Thyroid gland (tissue), 4 donors: ENCODE measurements at regions of chr3 and their contacts with region 1.

Region 1: DNA sequence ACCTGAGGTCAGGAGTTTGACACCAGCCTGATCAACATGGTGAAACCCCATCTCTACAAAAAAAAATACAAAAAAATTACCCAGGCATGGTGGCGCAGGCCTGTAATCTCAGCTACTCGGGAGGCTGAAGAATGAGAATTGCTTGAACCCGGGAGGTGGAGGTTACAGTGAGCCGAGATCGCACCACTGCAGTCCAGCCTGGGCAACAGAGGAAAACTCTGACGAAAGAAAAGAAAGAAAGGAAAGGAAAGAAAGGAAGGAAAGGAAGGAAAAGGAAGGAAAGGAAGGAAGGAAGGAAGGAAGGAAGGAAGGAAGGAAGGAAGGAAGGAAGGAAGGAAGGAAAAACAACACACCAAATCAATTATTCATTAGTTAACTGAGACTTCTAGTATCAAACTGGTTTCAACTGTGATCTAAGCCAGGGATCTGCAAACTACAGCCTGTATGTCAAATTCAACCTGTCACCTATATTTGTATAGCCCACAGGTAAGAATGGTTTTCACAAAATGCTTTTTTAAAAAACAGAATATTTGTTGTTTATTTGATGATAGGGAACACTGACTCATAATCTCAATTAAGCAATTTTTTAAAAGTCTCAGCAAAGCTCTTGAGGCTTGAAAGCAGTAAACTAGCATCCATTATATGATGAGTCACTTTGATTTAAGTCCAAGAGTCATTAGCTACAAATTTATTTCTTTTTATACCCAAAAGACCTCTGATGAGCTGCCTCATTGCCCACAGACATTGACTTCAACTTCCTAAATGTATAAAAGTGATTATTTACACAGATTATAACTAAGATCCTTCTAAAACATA is 127.6 kb downstream of the TBL1XR1 start:
- DNase-seq: no peak
- H3K4me3 ChIP-seq: no peak overlapping the region
- H3K27ac ChIP-seq: no peak overlapping the region
- H3K4me1 ChIP-seq: peaks cover 0 to 43% of the 10 kb centered on the region in 2 donors
- H3K27me3 ChIP-seq: no peaks in the 10 kb centered on the region
- CTCF ChIP-seq: no peak
- POLR2A ChIP-seq: no peak

Region 2: GRCh38 chr3:177169936-177170722 is 100.4 kb after region 1 on chr3:
- intact Hi-C with region 1: loop called (anchors 10 kb)
- DNase-seq: no peak
- H3K4me3 ChIP-seq: no peak overlapping the region
- H3K27ac ChIP-seq: no peak overlapping the region
- H3K4me1 ChIP-seq: peaks cover 28 to 38% of the 10 kb centered on the region in 2 donors
- H3K27me3 ChIP-seq: no peaks in the 10 kb centered on the region
- CTCF ChIP-seq: no peak
- POLR2A ChIP-seq: no peak